Activated T-helper 1 cell treated with anti-CD3 and anti-CD28 coated beads, Interleukin-12 subunit alpha, Interleukin-12 subunit beta, Interleukin-2, Interleukin-4 antibody, amounts not matched to agents 30 ng/mL and 10 ng/mL and 1 ng/mL, durations not matched to agents 14 hours and 24 hours and 36 hours (primary cell): ENCODE measurements at regions of chr12 and their contacts with region 1.

Region 1: GRCh38 chr12:31682136-31682962 is 22.9 kb downstream of the ETFBKMT start:
- DNase-seq: peak; percentile 62
- H3K4me3 Mint-ChIP-seq: no peak overlapping the region
- H3K27ac Mint-ChIP-seq: peak overlapping the region; percentile 50
- H3K4me1 Mint-ChIP-seq: peaks cover 12% of the 10 kb centered on the region
- H3K27me3 Mint-ChIP-seq: no peaks in the 10 kb centered on the region

Region 2: GRCh38 chr12:31728917-31729640 is 46.7 kb after region 1 on chr12 and contains the start of gene AMN1:
- intact Hi-C with region 1: loop called (anchors 1 kb)
- DNase-seq: peak; percentile 100
- H3K4me3 Mint-ChIP-seq: peak within 1 kb of the TSS; percentile 98
- H3K27ac Mint-ChIP-seq: peak within 1 kb of the TSS; percentile 99
- H3K4me1 Mint-ChIP-seq: peaks cover 53% of the 10 kb centered on the region
- H3K27me3 Mint-ChIP-seq: no peaks in the 10 kb centered on the region
- total RNA-seq, gene AMN1: 3.1 and 3.4 TPM in 2 replicates

Region 3: DNA sequence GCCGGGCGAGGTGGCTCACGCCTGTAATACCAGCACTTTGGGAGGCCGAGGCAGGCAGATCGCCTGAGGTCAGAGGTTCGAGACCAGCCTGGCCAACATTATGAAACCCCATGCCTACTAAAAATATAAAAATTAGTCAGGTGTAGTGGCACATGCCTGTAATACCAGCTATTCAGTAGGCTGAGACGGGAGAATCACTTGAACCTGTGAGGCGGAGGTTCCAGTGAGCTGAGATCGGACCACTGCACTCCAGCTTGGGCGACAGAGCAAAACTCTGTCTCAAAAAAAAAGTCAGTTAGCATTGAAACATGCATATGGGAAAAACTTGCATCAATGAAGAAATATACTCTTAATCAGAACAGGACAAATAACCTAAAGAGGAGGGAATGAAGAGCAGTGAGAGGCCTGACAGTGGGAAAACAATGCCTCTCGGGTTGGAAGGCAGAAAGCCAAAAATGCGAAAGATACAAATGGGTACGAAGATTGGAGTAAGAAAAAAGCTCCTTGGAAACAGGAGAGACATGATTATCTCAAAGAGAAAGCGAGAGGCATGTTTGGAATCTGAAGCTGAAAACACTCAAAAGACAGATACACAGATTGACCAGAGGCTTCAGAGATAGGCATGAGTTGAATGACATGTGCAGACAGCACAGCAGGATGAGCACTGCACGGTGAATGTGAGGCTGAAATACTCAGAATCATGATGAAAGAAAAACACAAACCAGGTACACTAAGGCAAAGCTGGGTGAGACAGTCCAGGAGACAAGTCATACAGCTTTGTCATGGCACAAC is 307.4 kb after region 1 on chr12:
- intact Hi-C with region 1: loop called (anchors 2 kb)
- DNase-seq: no peak
- H3K4me3 Mint-ChIP-seq: peak overlapping the region; percentile 54
- H3K27ac Mint-ChIP-seq: peak overlapping the region; percentile 81
- H3K4me1 Mint-ChIP-seq: peaks cover 63% of the 10 kb centered on the region
- H3K27me3 Mint-ChIP-seq: no peaks in the 10 kb centered on the region

Region 4: GRCh38 chr12:32106517-32107358 is 424.4 kb after region 1 on chr12 and contains the start of gene BICD1:
- intact Hi-C with region 1: loop called (anchors 2 kb)
- DNase-seq: peak; percentile 76
- H3K4me3 Mint-ChIP-seq: peak within 1 kb of the TSS; percentile 98
- H3K27ac Mint-ChIP-seq: peak within 1 kb of the TSS; percentile 87
- H3K4me1 Mint-ChIP-seq: peaks cover 36% of the 10 kb centered on the region
- H3K27me3 Mint-ChIP-seq: peaks cover 19% of the 10 kb centered on the region
- total RNA-seq, gene BICD1: 20.9 and 22.2 TPM in 2 replicates

Region 5: GRCh38 chr12:32312049-32312670 is 629.8 kb after region 1 on chr12:
- intact Hi-C with region 1: loop called (anchors 1 kb)
- DNase-seq: no peak
- H3K4me3 Mint-ChIP-seq: no peak overlapping the region
- H3K27ac Mint-ChIP-seq: no peak overlapping the region
- H3K4me1 Mint-ChIP-seq: peaks cover 5% of the 10 kb centered on the region
- H3K27me3 Mint-ChIP-seq: no peaks in the 10 kb centered on the region